GM18951 (cell line): ENCODE measurements at regions of chr9 and their contacts with region 1.

Region 1: DNA sequence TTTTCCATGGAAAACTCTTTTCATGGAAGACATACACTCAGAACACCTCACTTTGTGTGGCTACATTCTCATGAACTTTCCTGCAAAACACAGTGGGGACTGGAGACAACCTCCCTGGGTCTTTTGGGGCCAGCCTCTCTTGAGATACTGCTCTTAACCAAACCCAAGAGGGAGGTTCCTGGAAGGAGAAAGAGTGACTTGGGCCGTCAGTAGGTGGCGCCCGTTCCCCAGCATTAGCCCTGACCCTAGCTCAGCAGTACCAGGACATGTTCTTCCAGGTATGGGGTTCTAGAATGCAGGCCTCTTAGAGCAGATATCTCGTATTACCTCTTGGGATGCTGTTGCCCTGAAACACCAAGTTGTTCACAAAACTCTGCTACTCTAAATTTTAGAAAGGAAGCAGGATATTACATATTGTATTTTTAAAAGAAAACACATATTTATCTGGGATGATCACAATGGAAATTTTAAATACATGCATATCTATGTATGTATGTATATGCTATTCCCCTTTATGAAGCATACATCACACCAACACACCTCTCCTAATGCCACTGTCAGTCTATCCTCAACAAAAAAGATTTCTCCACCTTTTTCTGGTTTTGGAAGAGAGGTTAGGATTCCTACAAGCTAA is 15.8 kb upstream of the GLIS3 start:
- POLR2A ChIP-seq: no peak

Region 2: DNA sequence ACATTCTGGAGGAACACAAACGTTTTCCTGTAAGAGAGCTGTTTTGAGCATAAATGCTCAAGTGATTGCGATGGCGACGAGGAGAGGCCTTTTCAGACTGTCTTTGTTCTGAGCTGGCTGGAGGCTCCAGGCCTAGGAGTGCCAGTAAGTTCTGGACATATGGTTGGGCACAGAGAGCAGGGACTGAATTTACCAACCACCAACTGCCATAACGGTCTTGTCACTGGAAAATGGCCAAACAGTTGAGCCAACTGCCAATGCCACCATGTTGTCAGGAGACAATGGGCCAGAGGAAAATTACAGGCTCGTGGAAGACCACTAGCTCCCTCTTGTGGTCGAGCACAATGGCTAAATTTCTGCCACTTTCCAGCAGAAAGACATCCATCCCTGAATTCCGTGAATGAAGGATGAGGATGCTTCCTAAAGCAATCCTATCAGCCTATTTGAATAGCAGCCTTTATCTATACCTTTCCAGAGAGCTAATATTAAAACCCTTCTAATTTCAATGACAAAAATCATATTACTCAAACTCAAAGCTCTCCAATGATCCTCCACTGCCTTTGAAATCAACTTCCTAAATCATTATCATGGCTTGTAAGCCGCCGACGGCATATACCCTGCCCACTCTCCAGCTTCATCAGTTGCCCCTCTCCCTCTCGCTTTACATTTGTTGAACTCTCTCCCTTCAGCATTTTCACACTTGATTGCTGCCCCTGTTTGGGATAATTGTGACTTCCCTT is 51.1 kb after region 1 on chr9:
- in situ Hi-C with region 1: loop called (anchors 10 kb)
- POLR2A ChIP-seq: no peak